ENCODE measurements at regions of chr4 and their contacts with region 1.

Region 1: DNA sequence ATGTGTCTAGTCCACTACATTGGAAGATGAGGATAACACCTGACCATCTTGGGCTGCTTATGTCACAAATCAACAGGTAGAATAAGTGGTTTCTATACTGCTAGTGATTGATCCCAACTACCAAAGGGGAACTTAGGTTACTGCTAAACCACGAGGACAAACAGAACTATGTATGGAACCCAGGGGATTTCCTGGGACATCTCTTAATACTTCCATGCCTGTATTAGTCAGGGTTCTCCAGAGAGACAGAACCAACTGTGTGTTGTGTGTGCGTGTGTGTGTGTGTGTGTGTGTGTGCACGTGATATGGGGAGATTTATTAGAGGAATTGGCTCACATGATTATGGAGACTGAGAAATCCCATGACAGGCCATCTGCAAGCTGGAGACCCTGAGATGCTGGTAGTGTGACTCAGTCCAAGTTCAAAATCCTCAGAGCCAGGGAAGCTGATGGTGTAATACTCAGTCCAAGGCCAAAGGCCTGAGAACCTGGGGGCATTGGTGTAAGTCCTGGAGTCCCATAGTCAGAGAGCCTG is 16.2 kb upstream of the AFF1 start:
- DNase-seq: no peak
- ATAC-seq: peak; percentile 53
- H3K4me3 ChIP-seq: no peak overlapping the region
- H3K27ac ChIP-seq: no peak overlapping the region
- H3K4me1 ChIP-seq: peaks cover 3% of the 10 kb centered on the region; the same call in 1 of the 2 replicates
- H3K27me3 ChIP-seq: no peaks in the 10 kb centered on the region
- CTCF ChIP-seq: no peak
- EP300 ChIP-seq: no peak
- POLR2A ChIP-seq: no peak
- RAD21 ChIP-seq: no peak

Region 2: GRCh38 chr4:86683167-86683566 is 235.4 kb before region 1 on chr4:
- CTCF ChIA-PET with region 1: no interaction called
- POLR2A ChIA-PET with region 1: no interaction called
- RAD21 ChIA-PET with region 1: no interaction called
- SMC1A ChIA-PET with region 1: no interaction called
- in situ Hi-C with region 1: no loop called
- intact Hi-C with region 1: no loop called
- DNase-seq: no peak
- ATAC-seq: peak; percentile 60
- H3K4me3 ChIP-seq: no peak overlapping the region
- H3K27ac ChIP-seq: no peak overlapping the region
- H3K4me1 ChIP-seq: no peaks in the 10 kb centered on the region
- H3K27me3 ChIP-seq: no peaks in the 10 kb centered on the region
- CTCF ChIP-seq: no peak
- EP300 ChIP-seq: no peak
- POLR2A ChIP-seq: no peak
- RAD21 ChIP-seq: no peak

Region 3: GRCh38 chr4:86831262-86832130 is 87.1 kb before region 1 on chr4:
- CTCF ChIA-PET with region 1: no interaction called
- POLR2A ChIA-PET with region 1: no interaction called
- RAD21 ChIA-PET with region 1: no interaction called
- SMC1A ChIA-PET with region 1: no interaction called
- in situ Hi-C with region 1: no loop called
- intact Hi-C with region 1: no loop called
- DNase-seq: no peak
- ATAC-seq: no peak
- H3K4me3 ChIP-seq: no peak overlapping the region
- H3K27ac ChIP-seq: no peak overlapping the region
- H3K4me1 ChIP-seq: no peaks in the 10 kb centered on the region
- H3K27me3 ChIP-seq: no peaks in the 10 kb centered on the region
- CTCF ChIP-seq: no peak
- EP300 ChIP-seq: no peak
- POLR2A ChIP-seq: no peak
- RAD21 ChIP-seq: no peak

Region 4: GRCh38 chr4:86950831-86951525 is 32.4 kb after region 1 on chr4:
- CTCF ChIA-PET with region 1: interaction called, 8 read pairs
- POLR2A ChIA-PET with region 1: no interaction called
- RAD21 ChIA-PET with region 1: interaction called, 3 read pairs
- SMC1A ChIA-PET with region 1: interaction called, 11 read pairs
- in situ Hi-C with region 1: no loop called
- intact Hi-C with region 1: no loop called
- DNase-seq: no peak
- ATAC-seq: no peak
- H3K4me3 ChIP-seq: no peak overlapping the region
- H3K27ac ChIP-seq: no peak overlapping the region
- H3K4me1 ChIP-seq: peaks cover 21% of the 10 kb centered on the region
- H3K27me3 ChIP-seq: no peaks in the 10 kb centered on the region
- CTCF ChIP-seq: no peak
- EP300 ChIP-seq: no peak
- POLR2A ChIP-seq: no peak
- RAD21 ChIP-seq: no peak

Region 5: DNA sequence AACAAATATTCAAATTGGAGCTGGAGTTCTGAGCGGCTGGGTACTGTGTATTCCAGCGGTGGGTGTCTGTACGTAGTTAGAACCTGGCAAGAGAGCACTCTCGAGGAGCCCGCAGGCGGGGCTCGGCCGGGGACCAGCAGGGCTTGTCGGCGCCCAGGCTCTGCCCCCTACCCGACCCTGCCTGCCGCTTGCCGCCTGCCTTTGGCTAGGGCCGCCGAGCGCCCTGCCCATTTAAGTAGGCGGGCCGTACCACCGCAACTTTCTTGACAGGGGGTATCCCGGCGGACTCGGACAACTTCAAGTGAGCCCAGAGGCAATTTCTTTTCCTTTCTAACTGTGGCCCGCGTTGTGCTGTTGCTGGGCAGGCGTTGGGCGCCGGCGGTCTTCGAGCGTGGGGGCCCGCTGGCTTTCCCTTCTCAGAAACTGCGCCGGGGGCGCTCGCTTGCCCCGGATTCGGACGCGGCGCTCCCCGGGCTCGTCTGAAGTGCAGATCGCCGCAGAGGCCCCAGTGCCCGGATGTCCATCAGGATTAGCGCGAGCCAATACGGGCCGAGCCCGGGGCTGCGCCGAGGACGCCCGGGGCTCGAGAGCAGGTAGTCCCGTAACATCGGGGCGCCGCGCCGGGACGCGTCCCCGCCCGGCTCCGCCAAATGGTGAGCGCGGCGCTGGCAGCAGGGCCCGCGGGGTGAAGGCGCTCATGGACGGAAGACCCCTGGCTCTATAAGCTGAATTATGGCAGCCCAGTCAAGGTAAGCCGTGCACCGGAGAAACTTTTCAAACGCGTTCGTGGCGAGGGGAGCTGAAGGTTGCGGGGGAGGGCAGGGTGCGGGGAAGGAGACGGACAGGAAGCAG is 88.3 kb after region 1 on chr4:
- CTCF ChIA-PET with region 1: interaction called, 35 read pairs
- POLR2A ChIA-PET with region 1: interaction called, 4 read pairs
- RAD21 ChIA-PET with region 1: interaction called, 37 read pairs
- SMC1A ChIA-PET with region 1: interaction called, 97 read pairs
- in situ Hi-C with region 1: no loop called
- intact Hi-C with region 1: loop called (anchors 1 kb)
- DNase-seq: peak; percentile 71
- ATAC-seq: peak; percentile 82
- H3K4me3 ChIP-seq: peak overlapping the region; percentile 78
- H3K27ac ChIP-seq: peak overlapping the region; percentile 93
- H3K4me1 ChIP-seq: peaks cover 17% of the 10 kb centered on the region
- H3K27me3 ChIP-seq: no peaks in the 10 kb centered on the region
- CTCF ChIP-seq: peak in 2 of 3 experiments; percentile 33 to 34; a peak in 3 of 6 replicates
- EP300 ChIP-seq: 0 out of 4 replicates have a peak, but pooled peaks of 1 of the 2 experiments have one; percentile 17
- POLR2A ChIP-seq: peak; percentile 97
- RAD21 ChIP-seq: no peak

Region 6: DNA sequence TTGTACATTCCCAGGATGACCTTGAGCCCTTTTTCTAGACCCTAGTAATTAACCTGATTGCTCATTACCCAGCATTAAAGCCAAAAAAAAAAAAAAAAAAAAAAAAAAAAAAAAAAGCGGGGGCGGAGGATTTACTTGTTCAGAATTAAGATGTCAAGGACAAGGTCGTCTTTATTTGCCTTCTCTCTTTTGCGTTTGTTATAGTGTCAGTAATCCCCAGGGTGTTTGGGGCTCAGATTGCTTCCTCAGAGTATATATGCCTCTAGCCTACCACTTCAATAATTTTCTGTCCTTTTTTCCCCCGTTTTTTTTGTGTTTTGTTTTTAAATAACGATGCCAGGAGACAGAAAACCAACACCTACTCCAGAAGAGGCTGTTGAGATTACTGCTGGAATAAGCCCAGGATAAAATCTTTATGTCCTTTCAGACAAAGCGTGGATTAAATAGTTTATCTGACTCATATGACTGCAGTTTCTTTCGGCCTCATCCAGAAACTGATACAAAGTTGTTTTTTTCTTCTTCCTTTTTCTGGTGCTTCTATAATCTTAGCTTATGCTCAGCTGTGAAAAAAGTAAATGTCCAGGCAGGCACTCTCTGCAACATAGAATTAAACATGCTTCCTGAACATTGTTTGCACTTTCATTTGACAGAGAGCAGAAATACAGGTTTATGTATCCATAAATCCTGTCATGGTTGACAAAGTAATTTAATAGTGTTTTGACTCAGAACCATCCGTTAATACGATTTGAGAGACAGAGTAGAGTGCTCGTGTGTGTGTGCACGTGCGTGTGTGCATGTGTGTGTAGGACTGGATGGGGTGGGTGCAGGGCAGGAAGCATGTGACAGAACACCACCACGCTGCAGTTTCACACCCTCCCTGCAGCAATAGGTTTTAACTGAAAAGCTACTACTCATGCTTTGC is 154.9 kb after region 1 on chr4:
- CTCF ChIA-PET with region 1: interaction called, 4 read pairs
- POLR2A ChIA-PET with region 1: no interaction called
- RAD21 ChIA-PET with region 1: interaction called, 11 read pairs
- SMC1A ChIA-PET with region 1: interaction called, 12 read pairs
- in situ Hi-C with region 1: no loop called
- intact Hi-C with region 1: no loop called
- DNase-seq: peak; percentile 93
- ATAC-seq: peak; percentile 93
- H3K4me3 ChIP-seq: peak overlapping the region; percentile 65; the same call in 1 of the 2 replicates
- H3K27ac ChIP-seq: peak overlapping the region; percentile 98
- H3K4me1 ChIP-seq: peaks cover 17% of the 10 kb centered on the region
- H3K27me3 ChIP-seq: no peaks in the 10 kb centered on the region
- CTCF ChIP-seq: no peak
- EP300 ChIP-seq: peak; percentile 65 to 67; a peak in 3 of 4 replicates
- POLR2A ChIP-seq: peak; percentile 62
- RAD21 ChIP-seq: no peak

Region 7: DNA sequence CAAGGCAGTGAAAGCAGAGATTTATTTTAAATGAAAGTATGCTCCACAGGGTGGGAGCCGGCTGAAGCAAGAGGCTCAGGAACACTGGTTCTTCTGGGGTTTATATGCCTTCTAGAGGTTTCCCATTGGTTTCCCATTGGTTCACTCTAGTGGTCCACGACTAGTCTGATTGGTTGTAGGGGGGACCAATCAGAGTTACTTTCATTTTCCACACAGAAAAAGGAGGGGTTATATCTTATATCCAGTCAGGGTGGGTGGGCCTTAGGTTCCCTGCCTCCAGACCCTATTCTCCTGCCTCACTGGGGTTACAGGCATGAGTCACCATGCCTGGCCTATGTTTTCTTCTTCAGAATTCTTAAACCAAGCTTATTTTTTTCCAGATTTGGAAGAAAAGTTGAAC is 200.2 kb after region 1 on chr4:
- CTCF ChIA-PET with region 1: interaction called, 21 read pairs
- POLR2A ChIA-PET with region 1: interaction called, 4 read pairs
- RAD21 ChIA-PET with region 1: interaction called, 7 read pairs
- SMC1A ChIA-PET with region 1: interaction called, 15 read pairs
- in situ Hi-C with region 1: no loop called
- intact Hi-C with region 1: no loop called
- DNase-seq: no peak
- ATAC-seq: peak; percentile 73
- H3K4me3 ChIP-seq: no peak overlapping the region
- H3K27ac ChIP-seq: no peak overlapping the region
- H3K4me1 ChIP-seq: no peaks in the 10 kb centered on the region; the same call in 1 of the 2 replicates
- H3K27me3 ChIP-seq: no peaks in the 10 kb centered on the region
- CTCF ChIP-seq: no peak
- EP300 ChIP-seq: no peak
- POLR2A ChIP-seq: no peak
- RAD21 ChIP-seq: no peak